Activated CD4-positive, alpha-beta T cell treated with anti-CD3 and anti-CD28 coated beads for 36 hours (primary cell): ENCODE measurements at regions of chr4 and their contacts with region 1.

Region 1: DNA sequence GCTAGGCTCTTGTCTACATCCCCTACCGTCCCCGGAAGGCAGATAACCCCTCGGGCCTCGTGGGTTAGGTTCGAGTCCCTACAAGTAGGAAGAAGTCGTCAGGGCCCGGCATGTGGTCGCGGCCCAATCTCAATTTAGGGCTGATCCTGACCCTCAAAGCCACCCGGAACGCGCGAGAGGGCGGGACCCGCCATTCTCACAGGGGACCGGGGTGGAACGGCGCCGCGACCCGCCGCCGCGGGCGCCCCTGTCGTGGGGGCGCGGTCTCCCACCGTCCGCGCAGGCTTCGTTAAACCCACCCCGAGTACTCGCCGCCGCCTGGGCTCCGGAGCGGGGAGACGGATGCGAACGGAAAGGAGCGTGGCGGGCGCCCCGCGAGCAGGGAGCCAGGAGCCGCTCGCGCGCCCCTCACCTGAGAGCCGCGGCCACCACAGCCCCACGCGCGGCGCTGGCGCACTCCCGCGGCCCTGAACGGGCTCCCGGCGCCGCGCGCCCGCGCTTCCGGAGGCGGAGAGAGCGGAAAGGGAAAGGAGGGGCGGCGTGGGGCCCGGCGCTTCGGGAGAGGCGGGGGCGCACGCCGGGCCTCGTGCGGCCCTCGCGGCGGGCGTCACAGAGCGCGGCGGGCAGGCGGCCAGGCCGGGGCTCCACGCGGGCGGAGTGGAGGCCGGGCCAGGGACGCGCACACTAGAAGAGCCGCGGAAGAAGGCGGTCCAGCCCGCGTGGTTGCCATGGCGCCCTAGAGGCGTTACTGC is at the start of gene CFAP97:
- DNase-seq: peak; percentile 82
- ATAC-seq: peak; percentile 85
- H3K4me3 Mint-ChIP-seq: peak within 1 kb of the TSS; percentile 94
- H3K27ac Mint-ChIP-seq: peak within 1 kb of the TSS; percentile 97
- H3K4me1 Mint-ChIP-seq: peaks cover 41% of the 10 kb centered on the region
- H3K27me3 Mint-ChIP-seq: no peaks in the 10 kb centered on the region
- total RNA-seq, gene CFAP97: 54.6 to 81.8 TPM

Region 2: DNA sequence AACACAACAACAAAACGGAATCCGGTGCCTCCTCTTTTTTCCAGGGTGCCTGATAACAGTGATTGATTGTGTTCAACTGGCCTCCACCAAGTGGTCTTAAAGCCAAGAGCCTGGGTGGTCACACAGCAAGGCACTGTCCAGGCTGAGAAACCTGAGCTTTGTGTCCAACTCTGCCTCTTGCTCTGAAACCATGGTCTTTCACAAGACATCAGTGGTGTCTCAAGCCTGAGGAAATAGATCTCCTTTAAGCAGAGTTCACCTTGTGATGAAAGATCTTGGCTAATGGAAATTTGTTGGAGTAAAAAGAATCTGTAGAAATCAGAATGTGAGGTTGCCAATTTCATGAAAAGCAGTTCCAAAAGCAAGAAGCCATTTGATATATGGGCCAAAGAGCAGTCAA is 330.6 kb before region 1 on chr4:
- CTCF ChIA-PET with region 1: no interaction called
- POLR2A ChIA-PET with region 1: no interaction called
- intact Hi-C with region 1: no loop called
- DNase-seq: no peak
- ATAC-seq: no peak
- H3K4me3 Mint-ChIP-seq: no peak overlapping the region
- H3K27ac Mint-ChIP-seq: no peak overlapping the region
- H3K4me1 Mint-ChIP-seq: no peaks in the 10 kb centered on the region
- H3K27me3 Mint-ChIP-seq: peaks cover 2% of the 10 kb centered on the region

Region 3: GRCh38 chr4:185033950-185034349 is 169.7 kb before region 1 on chr4:
- CTCF ChIA-PET with region 1: no interaction called
- POLR2A ChIA-PET with region 1: no interaction called
- intact Hi-C with region 1: no loop called
- DNase-seq: no peak
- ATAC-seq: no peak
- H3K4me3 Mint-ChIP-seq: no peak overlapping the region
- H3K27ac Mint-ChIP-seq: no peak overlapping the region
- H3K4me1 Mint-ChIP-seq: no peaks in the 10 kb centered on the region
- H3K27me3 Mint-ChIP-seq: peaks cover 21% of the 10 kb centered on the region

Region 4: DNA sequence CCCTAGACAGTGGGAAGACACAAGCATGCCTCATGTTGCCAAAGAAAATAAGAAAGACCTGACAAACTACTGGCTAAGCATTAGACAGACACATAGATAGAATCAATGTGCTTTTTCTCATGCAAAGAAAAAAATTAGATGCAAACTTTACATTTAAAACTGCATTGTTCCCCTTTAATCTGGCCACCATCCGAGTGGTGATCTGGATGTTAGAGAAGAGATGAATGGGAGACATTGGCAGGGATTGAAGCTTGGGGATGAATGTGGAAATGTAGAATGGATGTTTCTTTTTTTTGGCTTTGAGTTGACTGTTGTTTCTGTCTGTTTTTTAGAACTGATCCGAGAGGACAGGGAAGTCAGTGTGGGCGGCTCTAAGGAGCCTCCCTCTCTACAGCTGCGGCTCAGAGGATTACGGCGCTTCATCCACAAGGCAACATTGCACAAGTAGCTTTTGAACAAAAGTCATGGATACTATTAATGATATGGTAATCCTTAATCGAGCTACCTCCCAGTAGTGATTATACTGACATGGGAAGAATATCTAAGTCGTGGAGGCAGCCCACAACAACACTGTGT is 132.3 kb before region 1 on chr4:
- CTCF ChIA-PET with region 1: no interaction called
- POLR2A ChIA-PET with region 1: no interaction called
- intact Hi-C with region 1: no loop called
- DNase-seq: no peak
- ATAC-seq: no peak
- H3K4me3 Mint-ChIP-seq: no peak overlapping the region
- H3K27ac Mint-ChIP-seq: no peak overlapping the region
- H3K4me1 Mint-ChIP-seq: no peaks in the 10 kb centered on the region
- H3K27me3 Mint-ChIP-seq: peaks cover 18% of the 10 kb centered on the region

Region 5: GRCh38 chr4:185142912-185143595 is 60.6 kb before region 1 on chr4 and contains the start of gene SLC25A4:
- CTCF ChIA-PET with region 1: no interaction called
- POLR2A ChIA-PET with region 1: no interaction called
- intact Hi-C with region 1: loop called (anchors 1 kb)
- DNase-seq: peak; percentile 91
- ATAC-seq: peak; percentile 95
- H3K4me3 Mint-ChIP-seq: peak within 1 kb of the TSS; percentile 74
- H3K27ac Mint-ChIP-seq: peak within 1 kb of the TSS; percentile 70
- H3K4me1 Mint-ChIP-seq: peaks cover 10% of the 10 kb centered on the region
- H3K27me3 Mint-ChIP-seq: peaks cover 33% of the 10 kb centered on the region
- total RNA-seq, gene SLC25A4: 4.2 to 5.0 TPM

Region 6: GRCh38 chr4:185171373-185172071 is 32.1 kb before region 1 on chr4:
- CTCF ChIA-PET with region 1: no interaction called
- POLR2A ChIA-PET with region 1: no interaction called
- intact Hi-C with region 1: no loop called
- DNase-seq: no peak
- ATAC-seq: no peak
- H3K4me3 Mint-ChIP-seq: no peak overlapping the region
- H3K27ac Mint-ChIP-seq: no peak overlapping the region
- H3K4me1 Mint-ChIP-seq: peaks cover 4% of the 10 kb centered on the region
- H3K27me3 Mint-ChIP-seq: peaks cover 3% of the 10 kb centered on the region

Region 7: DNA sequence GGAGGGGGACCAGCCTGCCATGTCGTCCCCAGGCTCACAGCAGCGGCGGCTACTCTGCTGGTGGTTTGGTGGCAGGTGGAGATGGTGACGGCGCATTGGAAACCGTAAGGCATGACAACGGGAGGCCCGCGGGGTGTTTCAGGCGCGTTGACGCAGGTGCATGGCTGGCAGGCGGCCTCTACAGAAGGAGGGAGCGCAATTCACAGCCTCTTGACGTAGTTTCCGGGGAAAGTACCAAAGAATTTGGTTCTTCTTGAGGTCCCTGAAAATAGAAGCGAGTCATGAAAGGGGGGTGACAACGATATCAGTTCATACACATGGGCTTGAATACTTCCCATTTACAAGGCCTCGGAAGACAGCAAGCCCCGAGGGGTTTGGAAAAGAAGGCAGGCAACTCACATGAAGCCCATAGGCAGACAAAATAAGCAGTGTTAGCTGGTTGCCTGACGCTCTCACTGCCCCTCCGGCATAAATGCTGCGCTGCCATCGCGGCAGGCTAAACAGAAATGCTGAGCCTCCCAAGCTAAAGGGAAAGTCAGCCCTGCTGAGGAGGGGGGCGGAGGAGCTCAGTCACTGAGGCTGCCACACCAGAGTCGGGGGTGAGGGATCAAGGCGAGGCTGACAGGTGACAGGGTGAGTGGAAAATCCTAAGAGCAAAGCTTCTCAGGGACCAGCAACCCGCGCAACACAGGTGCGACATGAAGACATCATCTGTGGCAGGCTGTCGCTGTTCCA is 383.9 kb after region 1 on chr4:
- CTCF ChIA-PET with region 1: no interaction called
- POLR2A ChIA-PET with region 1: no interaction called
- intact Hi-C with region 1: loop called in 1 of 2 experiments (anchors 5 kb)
- DNase-seq: peak; percentile 90
- ATAC-seq: peak; percentile 99
- H3K4me3 Mint-ChIP-seq: peak overlapping the region; percentile 40
- H3K27ac Mint-ChIP-seq: peak overlapping the region; percentile 63
- H3K4me1 Mint-ChIP-seq: peaks cover 18% of the 10 kb centered on the region
- H3K27me3 Mint-ChIP-seq: peaks cover 47% of the 10 kb centered on the region